ENCODE measurements at regions of chr5 and their contacts with region 1.

Region 1: DNA sequence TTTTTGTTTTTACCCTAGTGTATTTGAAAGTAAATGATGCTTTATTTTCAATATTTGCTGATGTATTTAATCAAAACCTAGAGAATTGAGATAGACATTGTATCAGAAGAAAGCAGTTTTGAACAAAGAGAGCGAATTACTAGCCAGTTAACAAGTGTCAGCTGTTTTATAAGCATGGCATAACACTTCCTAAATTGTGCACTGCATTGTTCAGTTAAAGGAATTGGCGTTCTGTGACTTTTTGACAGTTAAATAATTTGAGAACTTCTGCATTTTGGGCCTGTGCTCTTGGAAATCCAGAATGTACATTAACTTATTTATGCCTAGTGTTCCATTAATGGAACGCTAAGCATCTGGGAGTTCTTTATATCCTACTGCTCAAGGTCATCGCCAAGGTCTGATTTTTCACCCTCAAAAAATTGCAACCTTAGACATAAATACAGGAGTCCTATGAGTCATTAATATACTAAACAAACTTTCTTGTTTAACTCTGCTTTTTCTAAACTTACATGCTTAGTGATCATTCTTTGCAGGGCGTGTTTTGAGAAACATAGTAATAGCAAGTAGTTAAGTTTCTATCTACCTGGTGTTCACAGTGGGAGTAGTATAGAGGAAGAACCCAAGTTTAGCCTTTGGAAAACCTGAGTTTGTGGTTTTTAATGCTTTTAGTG is 31.1 kb downstream of the RASA1 start:
- DNase-seq: no peak
- H3K4me3 ChIP-seq: no peak overlapping the region
- H3K4me3 Mint-ChIP-seq: no peak overlapping the region
- H3K27ac Mint-ChIP-seq: no peak overlapping the region
- H3K4me1 ChIP-seq: no peaks in the 10 kb centered on the region
- H3K4me1 Mint-ChIP-seq: peaks cover 7% of the 10 kb centered on the region
- H3K27me3 ChIP-seq: no peaks in the 10 kb centered on the region
- H3K27me3 Mint-ChIP-seq: no peaks in the 10 kb centered on the region
- CTCF ChIP-seq: no peak

Region 2: GRCh38 chr5:86411596-86411995 is 887.2 kb before region 1 on chr5:
- CTCF ChIA-PET with region 1: no interaction called
- POLR2A ChIA-PET with region 1: no interaction called
- intact Hi-C with region 1: loop called (anchors 5 kb)
- DNase-seq: no peak
- H3K4me3 ChIP-seq: no peak overlapping the region
- H3K4me3 Mint-ChIP-seq: no peak overlapping the region
- H3K27ac Mint-ChIP-seq: no peak overlapping the region
- H3K4me1 ChIP-seq: no peaks in the 10 kb centered on the region
- H3K4me1 Mint-ChIP-seq: no peaks in the 10 kb centered on the region
- H3K27me3 ChIP-seq: no peaks in the 10 kb centered on the region
- H3K27me3 Mint-ChIP-seq: no peaks in the 10 kb centered on the region
- CTCF ChIP-seq: no peak

Region 3: GRCh38 chr5:87588316-87588715 is 289.5 kb after region 1 on chr5:
- CTCF ChIA-PET with region 1: no interaction called
- POLR2A ChIA-PET with region 1: no interaction called
- intact Hi-C with region 1: no loop called
- DNase-seq: no peak
- H3K4me3 ChIP-seq: no peak overlapping the region
- H3K4me3 Mint-ChIP-seq: no peak overlapping the region
- H3K27ac Mint-ChIP-seq: no peak overlapping the region
- H3K4me1 ChIP-seq: no peaks in the 10 kb centered on the region
- H3K4me1 Mint-ChIP-seq: no peaks in the 10 kb centered on the region
- H3K27me3 ChIP-seq: no peaks in the 10 kb centered on the region
- H3K27me3 Mint-ChIP-seq: no peaks in the 10 kb centered on the region
- CTCF ChIP-seq: no peak

Measured in Caco-2 (cell line).